ENCODE measurements at regions of chr11 and their contacts with region 1.

Region 1: DNA sequence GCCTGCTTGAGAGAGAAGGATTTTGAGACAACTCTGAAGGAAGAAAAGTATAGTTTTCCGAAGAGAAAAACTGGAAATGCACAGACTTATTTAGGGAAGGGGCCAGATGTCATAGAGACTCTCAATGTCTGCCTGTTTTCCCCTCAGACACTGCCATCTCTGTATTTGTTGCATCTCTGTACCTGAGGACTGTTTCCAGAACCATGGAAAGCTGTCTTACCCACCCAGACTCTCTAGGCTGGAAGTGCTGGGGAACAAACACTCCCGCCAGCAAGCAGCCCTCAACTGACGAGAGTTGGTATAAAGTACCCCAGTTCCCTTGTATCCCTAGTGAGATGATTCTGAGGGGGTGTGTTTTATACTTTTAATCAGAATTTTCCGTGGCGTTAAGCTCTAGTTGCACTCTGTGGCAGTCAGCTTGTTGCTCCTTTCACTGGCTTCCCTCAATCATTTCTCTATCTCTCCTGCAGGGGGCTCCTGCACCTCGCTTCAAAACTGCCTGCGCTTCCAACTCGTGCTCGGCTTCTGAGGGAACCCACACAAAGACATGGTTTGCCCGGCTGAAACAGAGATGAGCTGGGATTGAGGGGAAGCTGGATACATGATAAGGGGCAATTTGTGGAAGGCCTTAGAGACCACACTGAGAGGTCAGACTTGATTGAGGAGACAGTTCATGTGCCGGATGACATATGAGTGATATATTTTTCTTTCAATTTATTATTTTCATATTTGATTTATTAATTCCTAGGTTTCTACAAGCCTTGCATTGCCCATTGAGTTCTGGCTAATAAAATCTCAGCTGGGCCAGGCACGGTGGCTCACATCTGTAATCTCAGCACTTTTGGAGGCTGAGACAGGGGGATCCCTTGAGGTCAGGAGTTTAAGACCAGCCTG is 36.9 kb upstream of the CLPB start:
- DNase-seq: peak; percentile 72
- ATAC-seq: peak; percentile 88 to 90
- H3K4me3 ChIP-seq: no peak overlapping the region
- H3K27ac ChIP-seq: no peak overlapping the region
- H3K4me1 ChIP-seq: no peaks in the 10 kb centered on the region
- H3K27me3 ChIP-seq: peaks cover 28% of the 10 kb centered on the region
- CTCF ChIP-seq: peak; percentile 86

Region 2: GRCh38 chr11:72573072-72573854 is 102.0 kb after region 1 on chr11:
- intact Hi-C with region 1: loop called (anchors 10 kb)
- DNase-seq: no peak
- ATAC-seq: peak; percentile 74 to 75
- H3K4me3 ChIP-seq: no peak overlapping the region
- H3K27ac ChIP-seq: no peak overlapping the region
- H3K4me1 ChIP-seq: no peaks in the 10 kb centered on the region
- H3K27me3 ChIP-seq: peaks cover 7% of the 10 kb centered on the region
- CTCF ChIP-seq: peak; percentile 49

Measured in lower lobe of right lung (tissue), 2 donors.